Activated CD4-positive, alpha-beta T cell treated with anti-CD3 and anti-CD28 coated beads for 36 hours (primary cell): ENCODE measurements at regions of chr1 and their contacts with region 1.

Region 1: DNA sequence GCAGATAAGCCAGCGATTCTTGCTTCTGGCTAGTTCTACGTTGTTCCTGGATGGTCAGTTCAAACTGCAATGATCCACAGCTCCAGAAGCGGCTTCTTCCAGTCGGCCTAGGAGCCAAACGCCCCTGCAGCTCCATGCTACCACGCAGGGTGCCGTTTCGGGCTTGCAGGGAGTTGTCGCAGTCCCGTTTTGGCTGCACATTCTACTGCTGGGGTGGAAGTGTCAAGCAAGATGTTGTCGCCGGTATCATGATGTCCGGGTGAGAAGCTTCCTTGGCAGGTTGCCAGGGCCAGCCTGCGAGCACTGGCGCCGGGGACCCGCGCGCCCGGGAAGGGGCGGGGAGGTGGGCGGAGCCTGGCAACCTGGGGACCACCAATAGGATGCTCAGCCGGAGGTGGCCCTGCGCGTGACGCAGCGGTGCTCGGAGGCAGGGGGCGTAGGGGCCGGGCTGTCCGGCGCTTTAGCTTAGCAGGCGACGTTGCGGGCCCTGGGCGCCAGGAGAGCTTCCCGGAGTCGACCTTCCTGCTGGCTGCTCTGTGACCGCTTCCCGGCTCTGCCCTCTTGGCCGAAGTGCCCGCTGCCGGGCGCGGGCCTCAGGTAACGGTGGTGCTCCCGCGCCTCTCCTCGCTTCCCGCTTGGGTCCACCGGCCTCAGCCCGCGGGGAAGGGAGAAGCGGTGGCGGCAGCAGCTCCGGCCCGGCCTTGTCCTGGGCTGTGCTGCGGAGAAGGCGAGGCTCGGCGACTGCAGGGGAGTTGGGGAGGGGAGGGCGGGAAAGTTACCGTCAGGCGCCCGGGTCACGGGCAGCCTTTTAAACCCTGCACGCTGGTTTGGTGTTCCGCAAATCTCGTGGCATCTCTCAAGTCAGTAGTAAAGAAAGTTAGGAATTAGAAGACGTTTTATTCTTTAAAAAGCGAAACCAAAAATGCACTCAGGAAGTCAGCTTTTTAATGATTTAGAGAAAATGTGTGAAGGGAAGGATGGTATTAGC is at the start of gene SOAT1:
- DNase-seq: peak; percentile 96
- ATAC-seq: peak; percentile 95
- H3K4me3 Mint-ChIP-seq: peak within 1 kb of the TSS; percentile 77
- H3K27ac Mint-ChIP-seq: peak within 1 kb of the TSS; percentile 91
- H3K4me1 Mint-ChIP-seq: peaks cover 40% of the 10 kb centered on the region
- H3K27me3 Mint-ChIP-seq: no peaks in the 10 kb centered on the region
- total RNA-seq, gene SOAT1: 49.8 to 52.0 TPM

Region 2: DNA sequence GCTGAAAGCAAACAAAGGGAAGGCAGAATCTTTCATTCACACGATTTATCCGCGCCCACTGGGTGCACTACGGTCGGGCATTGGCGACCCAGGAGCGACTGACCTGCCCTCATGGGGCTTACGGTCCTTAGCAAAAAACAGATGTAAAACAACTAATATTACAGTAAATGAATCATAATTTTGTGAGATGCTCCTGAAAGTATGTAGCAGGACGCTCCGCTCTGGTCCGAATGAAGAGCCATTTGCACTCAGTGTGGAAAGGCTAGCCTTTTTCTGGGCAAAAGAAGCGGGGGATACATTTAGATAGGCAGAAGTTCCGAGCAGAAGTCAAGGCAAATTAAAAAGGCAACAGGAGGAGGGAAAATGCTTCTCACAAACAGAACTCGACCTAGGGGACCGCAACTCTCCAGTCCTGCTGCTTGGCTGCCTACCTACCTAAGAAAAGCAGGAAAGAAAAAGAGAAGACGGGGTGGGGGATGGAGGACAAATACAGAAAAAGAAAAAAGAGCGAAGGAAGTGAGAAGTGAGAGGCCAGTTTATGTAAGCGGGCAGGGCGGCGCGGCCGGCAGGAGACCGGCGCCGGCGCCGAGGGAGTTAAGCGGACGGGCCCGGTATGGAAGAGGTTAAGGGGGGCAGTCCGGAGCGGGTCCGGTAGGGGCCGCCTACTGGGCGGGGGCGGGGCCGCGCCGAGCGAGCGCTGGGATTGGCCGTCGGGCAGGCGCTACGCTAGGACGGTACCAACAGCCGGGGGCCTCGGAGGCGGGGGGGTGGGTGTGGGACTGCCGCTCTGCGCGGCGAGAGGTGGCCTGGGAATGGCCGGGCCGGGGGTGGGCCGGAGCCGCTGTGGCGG is 268.3 kb before region 1 on chr1 and contains the start of gene FAM20B:
- CTCF ChIA-PET with region 1: no interaction called
- POLR2A ChIA-PET with region 1: no interaction called
- intact Hi-C with region 1: loop called in 1 of 2 experiments (anchors 2 kb)
- DNase-seq: peak; percentile 93
- ATAC-seq: peak; percentile 85
- H3K4me3 Mint-ChIP-seq: peak within 1 kb of the TSS; percentile 87
- H3K27ac Mint-ChIP-seq: peak within 1 kb of the TSS; percentile 87
- H3K4me1 Mint-ChIP-seq: peaks cover 39% of the 10 kb centered on the region
- H3K27me3 Mint-ChIP-seq: no peaks in the 10 kb centered on the region
- total RNA-seq, gene FAM20B: 21.7 to 35.8 TPM

Region 3: DNA sequence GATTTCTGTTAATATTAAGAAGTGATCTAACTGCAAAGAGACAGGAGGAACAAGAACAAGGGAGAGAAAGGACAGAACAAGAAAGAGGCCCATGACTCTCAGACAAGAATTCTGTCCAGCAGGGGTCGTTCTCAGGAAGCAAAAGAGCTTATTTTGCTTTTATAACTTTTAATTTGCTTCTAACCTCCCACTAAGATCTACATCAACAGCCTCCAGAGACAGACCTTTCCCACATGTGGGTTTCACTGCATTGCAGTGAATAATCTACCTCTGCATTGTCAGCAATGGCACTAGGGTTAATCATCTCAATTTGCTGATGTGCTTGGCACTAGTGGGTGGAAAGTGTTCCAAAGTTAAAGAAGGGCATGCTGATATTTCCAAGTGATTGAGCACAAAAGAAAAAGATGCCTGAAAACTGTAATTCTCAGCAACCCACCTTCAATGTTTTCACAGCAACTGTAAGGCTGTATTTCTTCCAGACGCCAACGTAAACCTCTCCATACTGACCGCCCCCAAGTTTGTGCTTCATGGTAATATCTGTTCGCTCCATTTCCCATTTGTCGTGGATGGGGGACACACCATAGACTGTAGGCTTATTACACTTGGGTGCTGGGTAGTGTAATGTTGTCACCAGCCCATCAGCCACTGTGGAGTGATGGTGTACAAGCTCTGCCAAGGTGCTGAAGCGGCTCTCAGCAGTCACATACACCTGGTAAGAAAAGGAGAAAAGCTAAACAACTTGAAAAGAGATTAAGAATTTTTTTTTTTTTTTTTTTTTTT is 172.3 kb before region 1 on chr1:
- CTCF ChIA-PET with region 1: interaction called, 13 read pairs
- POLR2A ChIA-PET with region 1: no interaction called
- intact Hi-C with region 1: loop called (anchors 1 kb)
- DNase-seq: peak; percentile 64
- ATAC-seq: peak; percentile 69
- H3K4me3 Mint-ChIP-seq: no peak overlapping the region
- H3K27ac Mint-ChIP-seq: no peak overlapping the region
- H3K4me1 Mint-ChIP-seq: peaks cover 6% of the 10 kb centered on the region
- H3K27me3 Mint-ChIP-seq: no peaks in the 10 kb centered on the region

Region 4: GRCh38 chr1:179142889-179143299 is 150.7 kb before region 1 on chr1:
- CTCF ChIA-PET with region 1: no interaction called
- POLR2A ChIA-PET with region 1: no interaction called
- intact Hi-C with region 1: loop called in 1 of 2 experiments (anchors 5 kb)
- DNase-seq: no peak
- ATAC-seq: no peak
- H3K4me3 Mint-ChIP-seq: peak overlapping the region; percentile 38
- H3K27ac Mint-ChIP-seq: peak overlapping the region; percentile 75
- H3K4me1 Mint-ChIP-seq: peaks cover 40% of the 10 kb centered on the region
- H3K27me3 Mint-ChIP-seq: no peaks in the 10 kb centered on the region

Region 5: GRCh38 chr1:179882243-179883039 is 588.8 kb after region 1 on chr1 and contains the start of gene TOR1AIP1:
- CTCF ChIA-PET with region 1: no interaction called
- POLR2A ChIA-PET with region 1: no interaction called
- intact Hi-C with region 1: loop called in 1 of 2 experiments (anchors 10 kb)
- DNase-seq: peak; percentile 98
- ATAC-seq: peak; percentile 80
- H3K4me3 Mint-ChIP-seq: peak within 1 kb of the TSS; percentile 87
- H3K27ac Mint-ChIP-seq: peak within 1 kb of the TSS; percentile 98
- H3K4me1 Mint-ChIP-seq: peaks cover 59% of the 10 kb centered on the region
- H3K27me3 Mint-ChIP-seq: no peaks in the 10 kb centered on the region
- total RNA-seq, gene TOR1AIP1: 50.1 to 71.6 TPM